Caco-2 (cell line): ENCODE measurements at regions of chr7 and their contacts with region 1.

Region 1: GRCh38 chr7:66617295-66617694 is 11.4 kb upstream of the KCTD7 start:
- DNase-seq: no peak
- H3K4me3 ChIP-seq: no peak overlapping the region
- H3K4me3 Mint-ChIP-seq: no peak overlapping the region
- H3K27ac Mint-ChIP-seq: no peak overlapping the region
- H3K4me1 ChIP-seq: peaks cover 34% of the 10 kb centered on the region
- H3K4me1 Mint-ChIP-seq: peaks cover 12% of the 10 kb centered on the region
- H3K27me3 ChIP-seq: no peaks in the 10 kb centered on the region
- H3K27me3 Mint-ChIP-seq: no peaks in the 10 kb centered on the region
- CTCF ChIP-seq: no peak

Region 2: GRCh38 chr7:66281678-66282590 is 335.4 kb before region 1 on chr7:
- CTCF ChIA-PET with region 1: no interaction called
- POLR2A ChIA-PET with region 1: no interaction called
- intact Hi-C with region 1: no loop called
- DNase-seq: no peak
- H3K4me3 ChIP-seq: no peak overlapping the region
- H3K4me3 Mint-ChIP-seq: no peak overlapping the region
- H3K27ac Mint-ChIP-seq: peak overlapping the region; percentile 75
- H3K4me1 ChIP-seq: no peaks in the 10 kb centered on the region
- H3K4me1 Mint-ChIP-seq: peaks cover 24% of the 10 kb centered on the region
- H3K27me3 ChIP-seq: no peaks in the 10 kb centered on the region
- H3K27me3 Mint-ChIP-seq: no peaks in the 10 kb centered on the region
- CTCF ChIP-seq: no peak

Region 3: GRCh38 chr7:66307591-66308215 is 309.6 kb before region 1 on chr7:
- CTCF ChIA-PET with region 1: no interaction called
- POLR2A ChIA-PET with region 1: no interaction called
- intact Hi-C with region 1: no loop called
- DNase-seq: no peak
- H3K4me3 ChIP-seq: no peak overlapping the region
- H3K4me3 Mint-ChIP-seq: no peak overlapping the region
- H3K27ac Mint-ChIP-seq: no peak overlapping the region
- H3K4me1 ChIP-seq: peaks cover 40% of the 10 kb centered on the region
- H3K4me1 Mint-ChIP-seq: peaks cover 48% of the 10 kb centered on the region
- H3K27me3 ChIP-seq: no peaks in the 10 kb centered on the region
- H3K27me3 Mint-ChIP-seq: no peaks in the 10 kb centered on the region
- CTCF ChIP-seq: no peak

Region 4: GRCh38 chr7:66591799-66592596 is 25.3 kb before region 1 on chr7:
- CTCF ChIA-PET with region 1: no interaction called
- POLR2A ChIA-PET with region 1: no interaction called
- intact Hi-C with region 1: loop called (anchors 1 kb)
- DNase-seq: peak; percentile 94 to 95
- H3K4me3 ChIP-seq: peak overlapping the region; percentile 99
- H3K4me3 Mint-ChIP-seq: peak overlapping the region; percentile 97
- H3K27ac Mint-ChIP-seq: peak overlapping the region; percentile 99
- H3K4me1 ChIP-seq: peaks cover 7% of the 10 kb centered on the region; the same call in 1 of the 2 replicates
- H3K4me1 Mint-ChIP-seq: peaks cover 25% of the 10 kb centered on the region
- H3K27me3 ChIP-seq: no peaks in the 10 kb centered on the region
- H3K27me3 Mint-ChIP-seq: no peaks in the 10 kb centered on the region
- CTCF ChIP-seq: no peak